ENCODE measurements at regions of chr1 and their contacts with region 1.

Region 1: GRCh38 chr1:52842643-52843309 is at the start of gene ZYG11A:
- DNase-seq: peak; percentile 74
- ATAC-seq: peak; percentile 97
- H3K4me3 Mint-ChIP-seq: peak within 1 kb of the TSS; percentile 80
- H3K27ac Mint-ChIP-seq: peak within 1 kb of the TSS; percentile 59
- H3K4me1 Mint-ChIP-seq: peaks cover 6% of the 10 kb centered on the region
- H3K27me3 Mint-ChIP-seq: peaks cover 6% of the 10 kb centered on the region
- CTCF ChIP-seq: no peak
- total RNA-seq, gene ZYG11A: 1.3 and 1.5 TPM in 2 replicates

Region 2: DNA sequence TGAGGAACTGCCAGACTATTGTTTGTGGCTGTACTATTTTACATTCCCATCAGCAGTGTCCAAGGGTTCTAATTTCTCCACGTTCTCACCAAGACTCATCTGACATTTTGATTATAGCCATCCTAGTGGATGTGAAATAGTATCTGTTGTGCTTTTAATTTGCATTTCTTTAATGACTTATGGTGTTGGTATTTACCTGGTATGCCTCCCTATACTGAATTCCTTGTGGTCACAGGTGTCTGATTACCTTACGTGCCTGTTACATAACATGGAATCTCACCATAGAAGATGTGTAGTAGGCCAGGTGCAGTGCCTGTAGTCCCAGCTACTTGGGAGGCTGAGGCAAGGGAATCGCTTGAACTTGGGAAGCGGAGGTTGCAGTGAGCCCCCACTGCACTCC is 13.2 kb after region 1 on chr1:
- CTCF ChIA-PET with region 1: no interaction called
- POLR2A ChIA-PET with region 1: no interaction called
- intact Hi-C with region 1: no loop called
- DNase-seq: no peak
- ATAC-seq: no peak
- H3K4me3 Mint-ChIP-seq: no peak overlapping the region
- H3K27ac Mint-ChIP-seq: no peak overlapping the region
- H3K4me1 Mint-ChIP-seq: no peaks in the 10 kb centered on the region
- H3K27me3 Mint-ChIP-seq: no peaks in the 10 kb centered on the region
- CTCF ChIP-seq: no peak

Region 3: GRCh38 chr1:52920791-52921291 is 78.1 kb after region 1 on chr1:
- CTCF ChIA-PET with region 1: interaction called, 4 read pairs
- POLR2A ChIA-PET with region 1: interaction called, 4 read pairs
- intact Hi-C with region 1: loop called (anchors 1 kb)
- DNase-seq: no peak
- ATAC-seq: no peak
- H3K4me3 Mint-ChIP-seq: peak overlapping the region; percentile 85
- H3K27ac Mint-ChIP-seq: no peak overlapping the region
- H3K4me1 Mint-ChIP-seq: peaks cover 18% of the 10 kb centered on the region
- H3K27me3 Mint-ChIP-seq: peaks cover 2% of the 10 kb centered on the region
- CTCF ChIP-seq: no peak

Measured in activated B cell treated with CpG ODN at 0.5 μM for 24 hours (primary cell).